GM12878 (cell line): ENCODE measurements at regions of chr2 and their contacts with region 1.

Region 1: DNA sequence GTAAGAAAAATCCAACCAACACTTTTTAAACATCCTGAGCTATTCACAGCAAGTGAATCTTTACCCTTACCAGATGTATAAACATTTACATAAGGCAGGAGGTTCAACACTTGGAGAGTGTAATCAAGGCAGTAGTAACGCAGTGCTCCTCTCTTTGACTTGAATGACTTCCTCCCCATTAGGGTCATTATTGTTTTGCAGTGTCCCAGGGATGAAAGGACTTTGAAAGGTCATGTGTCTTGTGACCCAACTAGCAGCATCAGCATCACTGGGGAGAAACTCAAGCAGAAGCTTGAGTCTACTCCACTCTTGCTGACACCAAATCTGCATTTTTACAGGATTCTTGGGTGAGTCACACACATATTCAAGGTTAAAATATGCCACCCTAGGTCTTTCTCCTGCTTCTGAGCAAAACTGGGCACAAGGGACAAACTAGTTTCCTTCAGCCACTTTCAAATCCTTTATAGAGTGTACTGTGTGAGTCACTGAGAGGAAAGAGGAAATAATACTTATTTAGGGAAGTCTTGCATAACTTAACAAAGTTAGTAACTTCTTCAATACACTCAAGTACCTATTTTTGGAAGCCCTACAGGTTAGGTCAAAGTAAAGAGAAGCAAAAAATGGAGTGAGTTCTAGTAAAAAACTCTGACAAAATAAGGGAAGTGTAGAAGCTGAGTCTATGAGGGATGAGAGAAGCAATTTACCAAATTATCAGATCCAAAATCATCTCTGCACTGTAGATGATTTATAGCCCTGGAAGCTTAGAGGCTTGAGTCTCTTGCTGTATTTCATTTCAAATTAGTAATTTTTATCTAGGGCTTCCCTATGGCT is 51.0 kb upstream of the EML4 start:
- DNase-seq: peak; percentile 56
- ATAC-seq: peak; percentile 91
- H3K4me3 ChIP-seq: peak overlapping the region; percentile 13; the same call in 1 of the 2 replicates
- H3K27ac ChIP-seq: peak overlapping the region; percentile 50
- H3K4me1 ChIP-seq: peaks cover 18% of the 10 kb centered on the region
- H3K27me3 ChIP-seq: no peaks in the 10 kb centered on the region
- CTCF ChIP-seq: no peak
- EP300 ChIP-seq: no peak; a peak in 1 of 4 replicates
- POLR2A ChIP-seq: no peak
- RAD21 ChIP-seq: no peak

Region 2: DNA sequence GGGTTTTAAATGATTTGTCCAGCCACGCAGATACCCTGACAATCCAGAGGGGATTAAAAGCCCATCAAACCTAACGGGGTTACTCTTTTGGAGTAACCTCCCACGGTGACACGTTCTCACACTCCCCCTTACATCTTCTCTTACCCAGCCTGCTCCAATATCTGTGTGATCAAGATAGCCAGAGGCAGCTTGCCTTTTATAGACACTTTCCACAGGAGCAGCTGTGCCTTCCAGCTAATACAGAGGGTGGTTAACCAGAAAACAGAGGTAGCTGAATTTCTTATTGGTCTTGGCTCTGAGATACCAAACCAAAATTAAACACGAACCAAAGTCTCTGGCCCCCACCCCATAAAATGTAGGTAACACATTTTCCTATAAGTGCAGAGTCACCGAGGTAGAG is 303.2 kb before region 1 on chr2:
- CTCF ChIA-PET with region 1: no interaction called
- POLR2A ChIA-PET with region 1: no interaction called
- RAD21 ChIA-PET with region 1: no interaction called
- SMC1A ChIA-PET with region 1: no interaction called
- in situ Hi-C with region 1: no loop called
- intact Hi-C with region 1: no loop called
- DNase-seq: no peak
- ATAC-seq: no peak
- H3K4me3 ChIP-seq: no peak overlapping the region
- H3K27ac ChIP-seq: no peak overlapping the region
- H3K4me1 ChIP-seq: no peaks in the 10 kb centered on the region
- H3K27me3 ChIP-seq: no peaks in the 10 kb centered on the region
- CTCF ChIP-seq: no peak
- EP300 ChIP-seq: no peak
- POLR2A ChIP-seq: no peak
- RAD21 ChIP-seq: no peak

Region 3: GRCh38 chr2:42040643-42041278 is 77.4 kb before region 1 on chr2:
- CTCF ChIA-PET with region 1: no interaction called
- POLR2A ChIA-PET with region 1: no interaction called
- RAD21 ChIA-PET with region 1: no interaction called
- SMC1A ChIA-PET with region 1: no interaction called
- in situ Hi-C with region 1: no loop called
- intact Hi-C with region 1: no loop called
- DNase-seq: no peak
- ATAC-seq: no peak
- H3K4me3 ChIP-seq: no peak overlapping the region
- H3K27ac ChIP-seq: no peak overlapping the region
- H3K4me1 ChIP-seq: no peaks in the 10 kb centered on the region
- H3K27me3 ChIP-seq: peaks cover 0 to 2% of the 10 kb centered on the region in 2 experiments; a peak in 1 of 4 replicates
- CTCF ChIP-seq: no peak
- EP300 ChIP-seq: no peak
- POLR2A ChIP-seq: no peak
- RAD21 ChIP-seq: peak; percentile 28; the same call in 1 of the 2 replicates

Region 4: GRCh38 chr2:42132966-42133641 is 15.0 kb after region 1 on chr2:
- CTCF ChIA-PET with region 1: interaction called, 6 read pairs
- POLR2A ChIA-PET with region 1: interaction called, 13 read pairs
- RAD21 ChIA-PET with region 1: interaction called, 24 read pairs
- SMC1A ChIA-PET with region 1: interaction called, 64 read pairs
- in situ Hi-C with region 1: no loop called
- intact Hi-C with region 1: no loop called
- DNase-seq: peak; percentile 65
- ATAC-seq: peak; percentile 85
- H3K4me3 ChIP-seq: peak overlapping the region; percentile 18; the same call in 1 of the 2 replicates
- H3K27ac ChIP-seq: peak overlapping the region; percentile 9
- H3K4me1 ChIP-seq: peaks cover 50% of the 10 kb centered on the region
- H3K27me3 ChIP-seq: no peaks in the 10 kb centered on the region
- CTCF ChIP-seq: no peak
- EP300 ChIP-seq: no peak
- POLR2A ChIP-seq: peak; percentile 75
- RAD21 ChIP-seq: peak; percentile 11; the same call in 1 of the 2 replicates

Region 5: GRCh38 chr2:42189235-42189566 is 71.1 kb after region 1 on chr2:
- CTCF ChIA-PET with region 1: no interaction called
- POLR2A ChIA-PET with region 1: no interaction called
- RAD21 ChIA-PET with region 1: no interaction called
- SMC1A ChIA-PET with region 1: no interaction called
- in situ Hi-C with region 1: no loop called
- intact Hi-C with region 1: no loop called
- DNase-seq: no peak
- ATAC-seq: no peak
- H3K4me3 ChIP-seq: no peak overlapping the region
- H3K27ac ChIP-seq: no peak overlapping the region
- H3K4me1 ChIP-seq: peaks cover 9% of the 10 kb centered on the region; the same call in 1 of the 2 replicates
- H3K27me3 ChIP-seq: no peaks in the 10 kb centered on the region
- CTCF ChIP-seq: no peak
- EP300 ChIP-seq: no peak
- POLR2A ChIP-seq: no peak
- RAD21 ChIP-seq: no peak